ENCODE measurements at regions of chrX and their contacts with region 1.

Region 1: DNA sequence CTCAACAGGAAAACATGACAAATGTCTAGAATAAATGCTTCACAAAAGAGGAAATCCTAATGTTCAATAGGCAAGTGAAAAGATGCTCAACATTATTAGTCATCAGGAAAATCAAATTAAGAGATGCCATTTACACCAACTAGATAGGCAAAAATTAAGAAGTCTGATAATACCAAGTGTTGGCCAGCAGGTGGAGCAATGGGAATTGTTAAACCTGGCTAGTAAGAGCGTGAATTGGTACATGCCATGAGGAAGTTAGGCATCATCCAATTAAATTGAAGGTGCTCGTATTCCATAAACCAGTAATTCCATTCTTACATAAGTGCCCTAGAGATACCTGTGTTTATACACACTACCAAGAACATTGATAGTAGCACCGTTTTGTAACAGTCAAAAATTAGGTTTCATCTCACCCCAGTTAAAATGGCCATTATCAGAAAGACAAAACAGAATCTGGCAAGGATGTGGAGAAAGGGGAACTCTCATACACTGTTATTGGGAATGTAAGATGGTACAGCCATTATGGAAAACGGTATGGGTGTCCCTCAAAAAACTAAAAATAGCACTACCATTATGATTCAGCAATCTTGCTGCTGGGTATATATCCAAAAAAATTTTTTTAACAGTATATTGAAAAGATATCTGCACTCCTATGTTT is 14.0 kb upstream of the ZCCHC18 start:
- DNase-seq: peak; percentile 48
- ATAC-seq: peak; percentile 87
- H3K4me3 ChIP-seq: no peak overlapping the region
- H3K27ac ChIP-seq: no peak overlapping the region
- H3K4me1 ChIP-seq: no peaks in the 10 kb centered on the region
- H3K27me3 ChIP-seq: peaks cover 19% of the 10 kb centered on the region; the same call in 1 of the 2 replicates
- CTCF ChIP-seq: peak; percentile 68; the same call in 1 of the 2 replicates

Region 2: GRCh38 chrX:104136241-104137019 is 38.1 kb after region 1 on chrX:
- CTCF ChIA-PET with region 1: interaction called, 4 read pairs
- POLR2A ChIA-PET with region 1: no interaction called
- in situ Hi-C with region 1: no loop called
- intact Hi-C with region 1: loop called (anchors 1 kb)
- DNase-seq: peak; percentile 70
- ATAC-seq: peak; percentile 99
- H3K4me3 ChIP-seq: peak overlapping the region; percentile 18 to 32; a peak in 3 of 4 replicates
- H3K27ac ChIP-seq: no peak overlapping the region
- H3K4me1 ChIP-seq: peaks cover 4% of the 10 kb centered on the region
- H3K27me3 ChIP-seq: no peaks in the 10 kb centered on the region
- CTCF ChIP-seq: peak; percentile 82

Measured in Panc1 (cell line).